Mammary epithelial cell (primary cell): ENCODE measurements at regions of chr9 and their contacts with region 1.

Region 1: DNA sequence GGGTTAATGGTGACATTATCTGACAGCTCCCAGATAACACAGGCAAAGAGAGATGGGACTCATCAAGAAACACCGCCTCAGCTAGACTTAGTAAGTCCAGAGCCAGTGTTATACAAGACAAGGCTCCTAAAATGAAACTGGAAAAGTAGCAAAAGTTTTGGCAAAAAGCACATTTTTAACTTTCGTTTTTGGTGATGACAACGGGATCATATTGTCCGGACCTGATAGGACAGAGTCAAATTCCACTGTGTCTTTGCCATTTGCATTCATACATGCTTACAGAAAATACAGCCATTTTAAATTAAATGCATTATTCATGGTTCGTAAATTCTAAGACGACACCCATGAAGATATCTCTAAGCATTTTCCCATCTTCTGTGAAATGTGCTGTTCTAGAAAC is 152.1 kb downstream of the CRB2 start:
- DNase-seq: no peak
- H3K4me3 ChIP-seq: no peak overlapping the region
- H3K27ac ChIP-seq: no peak overlapping the region
- H3K4me1 ChIP-seq: no peaks in the 10 kb centered on the region
- H3K27me3 ChIP-seq: no peaks in the 10 kb centered on the region
- CTCF ChIP-seq: no peak

Region 2: GRCh38 chr9:123472862-123473614 is 35.0 kb before region 1 on chr9:
- CTCF ChIA-PET with region 1: no interaction called
- dilution Hi-C with region 1: loop called (anchors 5 kb)
- in situ Hi-C with region 1: no loop called
- intact Hi-C with region 1: no loop called
- DNase-seq: no peak
- H3K4me3 ChIP-seq: no peak overlapping the region
- H3K27ac ChIP-seq: no peak overlapping the region
- H3K4me1 ChIP-seq: no peaks in the 10 kb centered on the region
- H3K27me3 ChIP-seq: no peaks in the 10 kb centered on the region
- CTCF ChIP-seq: no peak

Region 3: GRCh38 chr9:123608104-123608503 is 100.1 kb after region 1 on chr9:
- CTCF ChIA-PET with region 1: no interaction called
- dilution Hi-C with region 1: loop called (anchors 25 kb)
- in situ Hi-C with region 1: no loop called
- intact Hi-C with region 1: no loop called
- DNase-seq: no peak
- H3K4me3 ChIP-seq: no peak overlapping the region
- H3K27ac ChIP-seq: no peak overlapping the region
- H3K4me1 ChIP-seq: no peaks in the 10 kb centered on the region
- H3K27me3 ChIP-seq: no peaks in the 10 kb centered on the region
- CTCF ChIP-seq: no peak